ENCODE measurements at regions of chr13 and their contacts with region 1.

Region 1: DNA sequence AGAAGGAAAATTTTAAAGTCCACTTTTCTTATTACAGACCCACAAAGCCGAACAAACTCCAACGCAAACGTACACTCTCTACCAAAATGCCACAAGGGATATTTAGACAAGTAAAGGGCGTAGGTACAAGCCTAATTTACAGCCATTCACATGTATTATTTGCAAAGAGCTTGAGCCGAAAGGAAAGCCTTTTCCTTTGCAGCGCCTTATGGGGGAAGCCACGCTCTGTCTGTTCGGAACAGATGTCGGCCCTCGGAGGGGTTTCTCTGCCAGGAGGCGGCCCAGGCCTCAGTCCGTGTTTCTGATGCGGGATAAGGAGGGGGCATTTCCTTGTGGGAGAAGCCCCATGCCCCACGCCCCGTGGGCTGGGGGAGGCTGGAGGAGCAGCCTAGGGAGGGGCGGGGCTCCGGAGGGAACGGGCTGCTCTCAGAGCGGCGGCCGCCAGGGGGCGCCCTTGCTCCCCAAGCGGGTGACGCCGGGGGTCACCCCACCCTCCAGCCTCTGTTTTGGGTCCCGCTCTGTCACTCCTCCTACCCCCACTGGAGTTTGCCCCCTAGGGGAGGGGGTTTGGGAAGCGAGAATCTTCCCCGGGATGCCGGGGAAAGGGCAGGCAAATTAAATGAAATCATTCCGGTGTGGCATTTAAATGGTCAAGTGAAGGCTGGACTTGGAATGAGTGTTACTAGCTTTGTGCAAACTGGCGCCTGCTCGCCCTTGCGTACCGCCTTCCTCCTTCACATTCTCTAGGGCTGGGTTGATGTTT is 2.9 kb downstream of the HTR2A start:
- DNase-seq: no peak
- H3K4me3 ChIP-seq: peak overlapping the region; percentile 77
- CTCF ChIP-seq: peak; percentile 89

Region 2: GRCh38 chr13:45799451-45799850 is 1094.5 kb before region 1 on chr13:
- CTCF ChIA-PET with region 1: no interaction called
- POLR2A ChIA-PET with region 1: no interaction called
- DNase-seq: no peak
- H3K4me3 ChIP-seq: no peak overlapping the region
- CTCF ChIP-seq: no peak

Region 3: DNA sequence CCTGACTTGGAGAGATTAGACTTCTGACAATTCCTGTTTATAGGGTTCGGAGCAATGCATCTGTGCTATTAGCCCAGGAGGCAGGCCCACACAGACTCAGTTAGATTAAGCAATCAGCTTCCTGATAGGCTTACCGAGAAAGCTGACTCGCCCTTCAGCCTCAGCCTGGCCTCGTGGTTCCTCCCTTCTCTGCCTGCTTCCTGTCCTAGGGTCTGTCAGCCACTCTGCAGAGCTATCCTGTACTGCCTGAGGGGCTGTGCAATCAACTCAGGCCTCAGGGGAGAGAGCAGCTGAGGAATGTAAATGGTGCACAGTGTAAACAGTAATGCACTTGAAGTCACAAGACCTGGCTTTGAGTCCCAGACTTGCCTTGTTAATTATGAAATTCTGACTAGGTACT is 27.8 kb before region 1 on chr13:
- CTCF ChIA-PET with region 1: interaction called, 27 read pairs
- POLR2A ChIA-PET with region 1: no interaction called
- DNase-seq: no peak
- H3K4me3 ChIP-seq: no peak overlapping the region
- CTCF ChIP-seq: no peak

Region 4: DNA sequence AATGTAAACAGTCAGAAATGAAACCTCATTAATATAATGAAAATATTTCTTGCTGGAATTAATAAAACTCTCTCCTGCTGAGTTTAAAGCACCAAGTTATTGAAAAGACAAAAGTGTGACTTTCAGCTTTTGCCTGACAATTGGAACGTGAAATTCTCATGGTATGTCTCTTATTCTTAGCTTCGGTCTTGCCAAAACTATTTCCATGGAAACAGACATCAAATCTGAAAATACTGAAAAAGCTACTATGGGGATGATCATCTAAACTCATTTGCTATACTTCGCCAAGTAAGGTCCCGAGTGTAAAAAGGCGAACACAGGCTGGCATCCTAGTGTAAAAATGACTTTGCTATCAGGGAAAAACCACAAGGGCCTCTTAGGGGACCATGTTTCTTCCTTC is 20.0 kb before region 1 on chr13:
- CTCF ChIA-PET with region 1: interaction called, 33 read pairs
- POLR2A ChIA-PET with region 1: no interaction called
- DNase-seq: no peak
- H3K4me3 ChIP-seq: no peak overlapping the region
- CTCF ChIP-seq: no peak

Region 5: GRCh38 chr13:46905247-46905646 is 11.3 kb after region 1 on chr13:
- CTCF ChIA-PET with region 1: interaction called, 42 read pairs
- POLR2A ChIA-PET with region 1: interaction called, 3 read pairs
- DNase-seq: no peak
- H3K4me3 ChIP-seq: no peak overlapping the region
- CTCF ChIP-seq: peak; percentile 3

Region 6: GRCh38 chr13:46961719-46962118 is 67.7 kb after region 1 on chr13:
- CTCF ChIA-PET with region 1: interaction called, 12 read pairs
- POLR2A ChIA-PET with region 1: interaction called, 4 read pairs
- DNase-seq: peak; percentile 53
- H3K4me3 ChIP-seq: no peak overlapping the region
- CTCF ChIP-seq: no peak

Measured in AG04449 (cell line).